ENCODE measurements at regions of chr6 and their contacts with region 1.

Region 1: GRCh38 chr6:88804701-88805100 is 158.7 kb downstream of the RNGTT start:
- DNase-seq: no peak
- H3K4me3 ChIP-seq: no peak overlapping the region
- H3K27ac ChIP-seq: no peak overlapping the region
- H3K4me1 ChIP-seq: no peaks in the 10 kb centered on the region
- H3K27me3 ChIP-seq: no peaks in the 10 kb centered on the region
- CTCF ChIP-seq: no peak
- POLR2A ChIP-seq: no peak

Region 2: GRCh38 chr6:88775866-88776571 is 28.7 kb before region 1 on chr6:
- intact Hi-C with region 1: no loop called
- DNase-seq: no peak
- H3K4me3 ChIP-seq: no peak overlapping the region
- H3K27ac ChIP-seq: no peak overlapping the region
- H3K4me1 ChIP-seq: no peaks in the 10 kb centered on the region
- H3K27me3 ChIP-seq: no peaks in the 10 kb centered on the region
- CTCF ChIP-seq: no peak
- POLR2A ChIP-seq: no peak

Region 3: DNA sequence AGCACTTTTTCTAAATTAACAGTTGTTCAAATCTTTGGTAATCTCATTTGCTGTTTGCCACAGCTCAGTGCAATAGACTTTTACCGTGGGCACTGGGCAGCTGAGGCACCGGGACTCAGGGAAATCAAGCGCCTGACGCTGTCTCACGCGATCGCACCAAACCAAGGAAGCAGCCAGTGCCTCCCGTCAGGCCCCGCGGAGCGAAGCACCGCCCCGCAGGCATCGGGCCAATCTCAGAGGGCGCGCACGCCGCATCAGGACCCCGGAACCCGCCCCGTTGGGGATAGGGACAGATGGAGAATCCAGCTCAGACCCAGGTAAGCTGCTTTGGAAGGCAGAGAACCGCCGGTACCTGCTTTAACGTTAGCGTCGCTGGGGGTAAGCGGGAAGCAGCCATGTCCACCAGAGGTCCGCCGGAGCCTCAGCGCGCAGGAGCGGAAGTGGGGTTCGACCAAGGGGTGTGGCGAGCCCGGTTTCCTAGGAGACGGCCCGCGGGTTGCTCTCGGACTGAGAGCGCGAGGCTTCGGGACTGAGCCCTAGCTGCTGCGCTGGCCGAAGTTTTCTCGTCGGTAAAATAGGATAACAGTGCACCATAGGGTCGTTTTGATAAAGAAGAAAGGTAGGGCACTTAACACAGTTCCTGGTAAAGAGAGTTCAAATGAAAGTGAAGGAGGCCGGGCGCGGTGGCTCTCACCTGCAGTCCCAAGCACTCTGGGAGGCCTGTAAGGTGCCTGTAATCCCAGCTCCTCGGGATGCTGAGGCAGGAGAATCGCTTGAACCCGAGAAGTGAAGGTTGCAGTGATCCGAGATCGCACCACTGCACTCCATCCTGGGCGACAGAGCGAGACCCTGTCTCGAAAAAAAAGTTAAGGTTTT is 833.9 kb after region 1 on chr6 and contains the start of gene LYRM2:
- intact Hi-C with region 1: no loop called
- DNase-seq: peak; percentile 90 to 95
- H3K4me3 ChIP-seq: peak within 1 kb of the TSS; percentile 58 to 76 (median 62)
- H3K27ac ChIP-seq: peak within 1 kb of the TSS; percentile 94 to 96
- H3K4me1 ChIP-seq: peaks cover 0 to 10% of the 10 kb centered on the region in 2 donors
- H3K27me3 ChIP-seq: no peaks in the 10 kb centered on the region
- CTCF ChIP-seq: peak in 2 of 3 donors; percentile 27 to 36
- POLR2A ChIP-seq: peak; percentile 95
- total RNA-seq, gene LYRM2: 20.3 to 27.4 (median 23.2) TPM

Region 4: DNA sequence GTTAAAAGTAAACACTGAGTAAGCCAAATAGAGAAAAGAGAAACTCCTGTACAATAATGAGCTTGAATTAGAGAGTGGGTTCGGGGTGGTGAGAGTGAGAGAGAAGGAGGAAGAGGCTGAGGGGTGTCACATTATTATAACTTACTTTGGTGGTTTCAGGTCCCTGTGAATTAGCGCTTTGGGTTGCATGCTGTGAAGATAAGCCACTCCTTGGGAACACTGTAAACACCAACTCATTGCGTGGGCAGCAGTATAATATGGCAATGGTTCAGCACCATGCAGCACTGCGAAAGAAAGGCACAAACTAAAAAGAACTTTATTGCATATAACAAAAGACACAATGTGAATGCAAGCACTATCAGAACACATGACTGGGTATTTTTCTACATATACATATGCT is 1755.2 kb after region 1 on chr6:
- intact Hi-C with region 1: loop called (anchors 10 kb)
- DNase-seq: no peak
- H3K4me3 ChIP-seq: no peak overlapping the region
- H3K27ac ChIP-seq: no peak overlapping the region
- H3K4me1 ChIP-seq: no peaks in the 10 kb centered on the region
- H3K27me3 ChIP-seq: no peaks in the 10 kb centered on the region
- CTCF ChIP-seq: no peak
- POLR2A ChIP-seq: no peak

Measured in breast epithelium (tissue), 4 donors.